Esophagus muscularis mucosa (tissue), 4 donors: ENCODE measurements at regions of chr2 and their contacts with region 1.

Region 1: DNA sequence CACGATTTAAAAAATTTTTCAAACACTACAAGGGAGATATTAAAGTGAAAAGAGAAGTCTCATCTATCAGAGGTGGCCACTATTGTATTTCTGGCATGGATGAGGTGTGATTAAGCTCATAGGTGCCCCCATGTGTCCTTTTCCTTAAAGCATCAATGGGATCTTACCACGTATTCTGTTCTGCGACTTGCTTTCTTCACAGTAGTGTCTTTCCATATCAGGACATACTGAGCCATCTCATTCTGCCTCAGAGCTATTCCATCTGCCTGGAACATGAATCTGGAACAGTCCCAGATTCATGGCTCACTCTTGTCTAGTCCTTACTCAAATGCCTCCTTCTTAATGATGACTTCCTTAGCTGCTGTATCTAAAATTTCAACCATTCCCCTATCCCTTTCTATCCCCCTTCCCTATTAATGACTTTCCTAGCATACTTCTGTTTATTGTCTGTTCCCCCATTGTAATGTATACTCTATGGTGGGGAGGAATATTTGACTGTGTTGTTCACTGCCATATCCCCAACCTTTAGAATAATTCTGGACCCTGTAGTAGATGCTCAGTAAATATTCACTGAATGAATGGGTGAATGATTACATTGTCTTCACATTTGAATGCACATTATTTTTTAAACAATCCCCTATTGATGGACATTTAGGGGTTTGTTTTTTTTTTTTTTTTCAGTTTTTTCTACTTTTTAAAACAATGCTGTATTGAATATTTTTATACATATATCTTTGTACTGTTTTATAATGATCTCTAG is 11.1 kb downstream of the STAMBP start:
- DNase-seq: no peak
- H3K4me3 ChIP-seq: peak overlapping the region in 2 of 4 donors; percentile 18 to 27
- H3K27ac ChIP-seq: peak overlapping the region; percentile 75 to 93 (median 86)
- H3K4me1 ChIP-seq: peaks cover 7 to 61% (median 49%) of the 10 kb centered on the region in 4 donors
- H3K27me3 ChIP-seq: no peaks in the 10 kb centered on the region
- CTCF ChIP-seq: no peak
- EP300 ChIP-seq: no peak
- POLR2A ChIP-seq: no peak

Region 2: GRCh38 chr2:73892631-73893329 is 52.9 kb after region 1 on chr2 and contains the start of gene ACTG2:
- intact Hi-C with region 1: loop called (anchors 5 kb)
- DNase-seq: peak; percentile 92
- H3K4me3 ChIP-seq: peak within 1 kb of the TSS; percentile 59 to 76 (median 63)
- H3K27ac ChIP-seq: peak within 1 kb of the TSS; percentile 93 to 94 (median 94)
- H3K4me1 ChIP-seq: peaks cover 0 to 44% (median 36%) of the 10 kb centered on the region in 4 donors
- H3K27me3 ChIP-seq: no peaks in the 10 kb centered on the region
- CTCF ChIP-seq: no peak
- EP300 ChIP-seq: no peak
- POLR2A ChIP-seq: peak; percentile 70
- total RNA-seq, gene ACTG2: 4,013 to 8,538 (median 5,633) TPM